ENCODE measurements at regions of chr3 and their contacts with region 1.

Region 1: GRCh38 chr3:79922633-79923032 is 154.8 kb upstream of the ROBO1 start:
- DNase-seq: no peak
- H3K4me3 ChIP-seq: no peak overlapping the region
- H3K4me3 Mint-ChIP-seq: no peak overlapping the region
- H3K27ac ChIP-seq: no peak overlapping the region
- H3K27ac Mint-ChIP-seq: no peak overlapping the region
- H3K4me1 ChIP-seq: no peaks in the 10 kb centered on the region
- H3K4me1 Mint-ChIP-seq: no peaks in the 10 kb centered on the region
- H3K27me3 ChIP-seq: no peaks in the 10 kb centered on the region
- H3K27me3 Mint-ChIP-seq: no peaks in the 10 kb centered on the region

Region 2: GRCh38 chr3:78689378-78689777 is 1233.3 kb before region 1 on chr3:
- CTCF ChIA-PET with region 1: no interaction called
- POLR2A ChIA-PET with region 1: no interaction called
- intact Hi-C with region 1: no loop called
- DNase-seq: no peak
- H3K4me3 ChIP-seq: no peak overlapping the region
- H3K4me3 Mint-ChIP-seq: no peak overlapping the region
- H3K27ac ChIP-seq: no peak overlapping the region
- H3K27ac Mint-ChIP-seq: no peak overlapping the region
- H3K4me1 ChIP-seq: no peaks in the 10 kb centered on the region
- H3K4me1 Mint-ChIP-seq: no peaks in the 10 kb centered on the region
- H3K27me3 ChIP-seq: no peaks in the 10 kb centered on the region
- H3K27me3 Mint-ChIP-seq: no peaks in the 10 kb centered on the region

Region 3: GRCh38 chr3:79937567-79937966 is 14.9 kb after region 1 on chr3:
- CTCF ChIA-PET with region 1: no interaction called
- POLR2A ChIA-PET with region 1: no interaction called
- intact Hi-C with region 1: no loop called
- DNase-seq: no peak
- H3K4me3 ChIP-seq: no peak overlapping the region
- H3K4me3 Mint-ChIP-seq: no peak overlapping the region
- H3K27ac ChIP-seq: no peak overlapping the region
- H3K27ac Mint-ChIP-seq: no peak overlapping the region
- H3K4me1 ChIP-seq: no peaks in the 10 kb centered on the region
- H3K4me1 Mint-ChIP-seq: no peaks in the 10 kb centered on the region
- H3K27me3 ChIP-seq: no peaks in the 10 kb centered on the region
- H3K27me3 Mint-ChIP-seq: no peaks in the 10 kb centered on the region

Region 4: DNA sequence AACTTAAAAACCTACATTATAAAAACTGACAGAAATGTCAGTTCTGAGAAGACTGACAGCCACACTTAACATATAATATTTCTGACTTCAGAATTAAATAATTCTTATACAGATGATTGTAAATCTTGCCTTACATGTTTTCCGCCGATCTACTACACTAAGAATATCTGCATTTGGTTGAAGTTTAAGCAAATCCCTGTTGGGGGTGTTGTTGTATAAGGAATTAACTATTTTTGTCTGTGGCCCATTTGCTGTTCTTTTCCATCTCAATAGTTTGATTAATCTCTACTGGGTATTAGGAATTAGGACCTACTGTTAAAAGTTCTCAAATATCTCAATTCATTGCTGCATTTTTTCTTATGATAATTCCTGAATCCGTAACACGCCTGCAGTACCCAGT is 683.4 kb after region 1 on chr3:
- CTCF ChIA-PET with region 1: no interaction called
- POLR2A ChIA-PET with region 1: no interaction called
- intact Hi-C with region 1: loop called (anchors 5 kb)
- DNase-seq: no peak
- H3K4me3 ChIP-seq: no peak overlapping the region
- H3K4me3 Mint-ChIP-seq: no peak overlapping the region
- H3K27ac ChIP-seq: no peak overlapping the region
- H3K27ac Mint-ChIP-seq: no peak overlapping the region
- H3K4me1 ChIP-seq: no peaks in the 10 kb centered on the region
- H3K4me1 Mint-ChIP-seq: no peaks in the 10 kb centered on the region
- H3K27me3 ChIP-seq: no peaks in the 10 kb centered on the region
- H3K27me3 Mint-ChIP-seq: no peaks in the 10 kb centered on the region